Psoas muscle (tissue), 8 donors: ENCODE measurements at regions of chr4 and their contacts with region 1.

Region 1: DNA sequence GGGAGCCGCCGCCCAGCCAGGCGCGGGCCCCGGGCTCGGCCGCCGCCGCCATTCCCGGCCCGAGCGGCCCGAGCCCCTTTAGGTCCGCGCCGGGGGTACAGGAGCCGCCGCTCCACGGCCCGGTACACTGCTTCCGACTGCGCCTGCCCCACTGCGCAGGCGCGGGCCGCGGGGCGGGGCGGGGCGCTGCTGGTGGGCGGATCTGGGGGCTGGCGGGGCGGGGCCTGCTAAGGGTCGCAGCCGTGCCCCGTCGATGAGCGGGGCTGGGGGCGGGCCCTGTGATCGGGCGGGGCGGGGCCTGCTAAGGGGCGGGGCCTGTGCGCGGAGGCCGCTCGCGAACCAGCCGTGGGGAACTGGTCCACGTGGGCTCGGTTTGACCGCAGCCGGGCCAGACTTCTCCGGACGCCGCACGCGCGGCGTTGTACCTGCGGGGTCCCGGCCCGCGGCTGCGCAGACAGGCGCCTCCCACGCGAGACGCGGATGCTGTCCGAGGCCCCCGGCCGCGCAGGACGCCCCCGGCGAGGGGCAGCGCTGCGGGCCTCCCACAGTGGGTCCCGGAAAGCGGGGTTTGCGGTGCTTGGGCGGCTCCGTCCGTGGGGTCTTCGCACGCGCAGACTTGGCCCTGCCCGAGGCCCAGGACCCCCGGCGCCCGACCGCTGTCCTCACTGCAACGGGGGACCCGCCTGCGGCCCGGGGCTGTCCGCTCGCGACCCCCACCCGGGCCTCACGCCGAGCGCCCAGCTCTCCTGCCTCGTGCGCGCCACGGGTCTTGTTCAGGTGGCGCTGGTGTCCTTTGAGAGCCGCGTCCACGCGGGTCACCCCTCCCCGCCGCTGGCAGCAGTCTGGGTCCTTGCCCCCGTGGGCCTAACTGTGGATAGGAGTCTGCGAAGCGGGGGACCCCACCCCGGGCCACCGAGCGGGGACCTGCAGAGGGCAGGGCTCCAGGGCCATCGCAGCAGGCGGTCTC is at the start of gene DGKQ:
- DNase-seq: peak; percentile 88 to 93
- ATAC-seq: peak; percentile 99
- H3K4me3 ChIP-seq: peak within 1 kb of the TSS; percentile 83
- H3K27ac ChIP-seq: no peak within 1 kb of the TSS
- H3K4me1 ChIP-seq: peaks cover 18% of the 10 kb centered on the region
- H3K27me3 ChIP-seq: peaks cover 0 to 3% (median 2%) of the 10 kb centered on the region in 3 donors
- CTCF ChIP-seq: no peak
- total RNA-seq, gene DGKQ: 2.8 to 3.9 (median 3.5) TPM

Region 2: GRCh38 chr4:931960-932712 is 41.6 kb before region 1 on chr4 and contains the starts of genes GAK and TMEM175:
- intact Hi-C with region 1: loop called in 1 of 2 experiments (anchors 5 kb)
- DNase-seq: peak; percentile 96 to 98
- ATAC-seq: peak; percentile 96 to 99 (median 97)
- H3K4me3 ChIP-seq: peak within 1 kb of the TSS; percentile 99
- H3K27ac ChIP-seq: peak within 1 kb of the TSS; percentile 99
- H3K4me1 ChIP-seq: peaks cover 30% of the 10 kb centered on the region
- H3K27me3 ChIP-seq: no peaks in the 10 kb centered on the region
- CTCF ChIP-seq: no peak
- total RNA-seq, gene GAK: 20.9 to 46.7 (median 29.9) TPM
- total RNA-seq, gene TMEM175: 11.7 to 15.3 (median 14.7) TPM